PC-3 (cell line): ENCODE measurements at regions of chr3 and their contacts with region 1.

Region 1: GRCh38 chr3:51498876-51499738 is 708 bp downstream of the DCAF1 start:
- DNase-seq: peak; percentile 94
- ATAC-seq: peak; percentile 77
- H3K4me3 ChIP-seq: peak overlapping the region; percentile 83
- H3K27ac ChIP-seq: peak overlapping the region; percentile 86
- H3K4me1 ChIP-seq: peaks cover 12% of the 10 kb centered on the region
- H3K27me3 ChIP-seq: no peaks in the 10 kb centered on the region
- CTCF ChIP-seq: no peak

Region 2: DNA sequence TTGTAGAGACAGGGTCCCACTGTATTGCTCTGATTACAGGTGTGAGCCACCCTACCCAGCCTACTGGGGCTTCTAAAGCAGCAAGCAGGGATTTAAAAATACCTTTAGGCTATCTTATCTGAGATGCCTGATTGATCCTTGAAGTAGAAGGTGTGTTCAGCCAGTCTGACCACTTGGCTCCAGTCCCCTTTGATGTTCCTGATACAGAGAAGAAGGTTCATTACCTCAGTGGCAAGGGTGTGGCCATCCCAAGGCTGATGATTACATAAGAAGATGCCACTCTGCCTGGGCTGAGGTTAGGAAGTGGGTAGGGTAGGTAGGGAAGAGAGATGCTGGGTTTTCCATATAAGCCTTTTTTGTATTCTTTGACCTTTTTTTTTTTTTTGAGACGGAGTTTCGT is 11.9 kb after region 1 on chr3:
- CTCF ChIA-PET with region 1: no interaction called
- POLR2A ChIA-PET with region 1: interaction called, 17 read pairs
- intact Hi-C with region 1: no loop called
- DNase-seq: no peak
- ATAC-seq: no peak
- H3K4me3 ChIP-seq: no peak overlapping the region
- H3K27ac ChIP-seq: no peak overlapping the region
- H3K4me1 ChIP-seq: no peaks in the 10 kb centered on the region
- H3K27me3 ChIP-seq: no peaks in the 10 kb centered on the region
- CTCF ChIP-seq: no peak

Region 3: GRCh38 chr3:51581529-51581928 is 82.4 kb after region 1 on chr3:
- CTCF ChIA-PET with region 1: no interaction called
- POLR2A ChIA-PET with region 1: interaction called, 33 read pairs
- intact Hi-C with region 1: no loop called
- DNase-seq: no peak
- ATAC-seq: no peak
- H3K4me3 ChIP-seq: no peak overlapping the region
- H3K27ac ChIP-seq: no peak overlapping the region
- H3K4me1 ChIP-seq: no peaks in the 10 kb centered on the region
- H3K27me3 ChIP-seq: no peaks in the 10 kb centered on the region
- CTCF ChIP-seq: no peak

Region 4: DNA sequence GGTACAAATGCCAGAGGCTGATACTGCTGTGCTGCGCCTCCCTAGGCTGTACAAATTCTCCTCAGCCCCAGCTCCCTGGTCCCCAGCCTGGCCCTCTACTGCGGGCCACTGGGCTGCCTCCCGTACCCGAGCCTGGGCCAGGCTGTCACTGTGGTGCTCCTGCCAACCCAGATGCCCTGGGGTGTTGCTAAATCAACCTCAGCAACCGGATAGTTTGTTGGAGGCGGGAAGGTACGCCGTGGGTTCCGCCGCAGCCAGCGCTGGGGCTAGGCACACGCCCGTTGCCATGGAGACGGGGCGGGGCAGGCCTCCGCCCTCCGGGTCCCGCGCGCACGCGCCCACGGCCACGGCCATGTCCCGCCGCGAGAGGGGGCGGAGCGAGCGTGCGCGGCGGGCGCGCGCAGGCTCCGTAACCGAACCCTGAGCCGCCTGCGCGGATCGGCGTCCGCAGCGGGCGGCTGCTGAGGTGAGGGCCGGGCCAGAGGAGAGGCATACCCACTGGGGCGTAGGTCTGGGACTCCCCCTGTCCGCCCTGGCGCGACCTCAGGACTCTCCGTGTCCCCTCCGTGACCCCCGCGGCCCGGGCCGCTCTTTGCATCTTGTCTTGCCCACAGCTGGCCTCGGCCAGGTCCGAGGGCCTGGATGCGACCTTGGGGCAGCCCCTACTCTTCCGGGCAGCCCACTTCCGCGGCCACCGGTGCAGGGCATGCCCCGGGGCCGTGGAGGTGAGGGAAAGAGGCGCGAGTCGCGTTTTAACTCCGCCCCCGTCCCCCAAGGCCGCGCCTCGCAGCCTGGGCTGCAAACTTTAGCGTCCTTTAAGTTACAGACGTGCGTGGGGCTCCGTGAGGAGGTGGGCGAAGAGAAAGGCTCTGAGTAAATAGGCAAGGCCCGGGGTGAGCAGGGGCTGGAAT is 172.0 kb after region 1 on chr3 and contains the start of gene TEX264:
- CTCF ChIA-PET with region 1: interaction called, 29 read pairs
- POLR2A ChIA-PET with region 1: interaction called, 3 read pairs
- intact Hi-C with region 1: loop called (anchors 1 kb)
- DNase-seq: peak; percentile 95
- ATAC-seq: peak; percentile 67
- H3K4me3 ChIP-seq: peak within 1 kb of the TSS; percentile 91
- H3K27ac ChIP-seq: peak within 1 kb of the TSS; percentile 64
- H3K4me1 ChIP-seq: peaks cover 57% of the 10 kb centered on the region
- H3K27me3 ChIP-seq: no peaks in the 10 kb centered on the region
- CTCF ChIP-seq: no peak
- total RNA-seq, gene TEX264: 85.5 and 88.1 TPM in 2 replicates

Region 5: GRCh38 chr3:51706021-51706485 is 206.9 kb after region 1 on chr3:
- CTCF ChIA-PET with region 1: interaction called, 15 read pairs
- POLR2A ChIA-PET with region 1: no interaction called
- intact Hi-C with region 1: no loop called
- DNase-seq: no peak
- ATAC-seq: no peak
- H3K4me3 ChIP-seq: no peak overlapping the region
- H3K27ac ChIP-seq: no peak overlapping the region
- H3K4me1 ChIP-seq: no peaks in the 10 kb centered on the region
- H3K27me3 ChIP-seq: no peaks in the 10 kb centered on the region
- CTCF ChIP-seq: no peak

Region 6: DNA sequence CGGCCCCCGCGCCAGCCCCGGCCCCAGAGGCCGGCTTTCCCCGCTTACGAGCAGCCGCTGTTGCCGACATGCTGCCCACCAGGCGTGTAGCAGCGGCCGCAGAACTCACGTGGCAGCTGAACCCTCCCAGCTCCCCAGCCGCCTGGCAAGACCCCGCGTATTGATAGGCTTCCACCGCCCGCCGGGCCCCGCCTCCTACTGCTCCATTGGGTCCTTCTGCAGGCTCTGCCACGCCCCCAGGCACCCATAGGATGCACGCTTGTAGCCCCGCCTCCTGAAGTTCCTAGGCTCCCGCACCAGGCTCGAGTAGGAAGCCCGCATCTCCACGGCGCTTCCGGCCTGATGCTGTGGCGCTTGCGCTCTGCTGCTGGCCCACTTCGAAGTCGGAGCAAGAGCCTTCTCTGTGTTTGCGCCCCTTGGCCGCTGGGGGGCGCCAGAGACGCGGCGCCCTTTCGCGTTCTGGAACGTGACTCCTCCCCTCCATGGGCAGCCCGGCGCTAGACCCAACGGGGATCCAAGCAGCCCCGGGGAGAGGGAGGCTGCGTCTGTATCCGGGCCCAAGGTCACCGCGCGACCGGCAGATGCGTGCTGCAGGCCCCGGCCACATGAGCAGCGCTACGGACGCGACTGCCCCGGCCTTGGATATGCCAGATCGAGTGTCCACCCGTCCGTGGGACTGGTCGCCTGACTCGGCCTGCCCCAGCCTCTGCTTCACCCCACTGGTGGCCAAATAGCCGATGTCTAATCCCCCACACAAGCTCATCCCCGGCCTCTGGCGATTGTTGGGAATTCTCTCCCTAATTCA is 442.9 kb after region 1 on chr3 and contains the starts of genes PARP3 and RRP9:
- CTCF ChIA-PET with region 1: no interaction called
- POLR2A ChIA-PET with region 1: interaction called, 26 read pairs
- intact Hi-C with region 1: no loop called
- DNase-seq: peak; percentile 100
- ATAC-seq: peak; percentile 86
- H3K4me3 ChIP-seq: peak within 1 kb of the TSS; percentile 92
- H3K27ac ChIP-seq: peak within 1 kb of the TSS; percentile 81
- H3K4me1 ChIP-seq: peaks cover 33% of the 10 kb centered on the region
- H3K27me3 ChIP-seq: no peaks in the 10 kb centered on the region
- CTCF ChIP-seq: peak; percentile 97
- total RNA-seq, gene PARP3: 19.3 and 30.5 TPM in 2 replicates
- total RNA-seq, gene RRP9: 95.0 and 112 TPM in 2 replicates